ENCODE measurements at regions of chr10 and their contacts with region 1.

Region 1: DNA sequence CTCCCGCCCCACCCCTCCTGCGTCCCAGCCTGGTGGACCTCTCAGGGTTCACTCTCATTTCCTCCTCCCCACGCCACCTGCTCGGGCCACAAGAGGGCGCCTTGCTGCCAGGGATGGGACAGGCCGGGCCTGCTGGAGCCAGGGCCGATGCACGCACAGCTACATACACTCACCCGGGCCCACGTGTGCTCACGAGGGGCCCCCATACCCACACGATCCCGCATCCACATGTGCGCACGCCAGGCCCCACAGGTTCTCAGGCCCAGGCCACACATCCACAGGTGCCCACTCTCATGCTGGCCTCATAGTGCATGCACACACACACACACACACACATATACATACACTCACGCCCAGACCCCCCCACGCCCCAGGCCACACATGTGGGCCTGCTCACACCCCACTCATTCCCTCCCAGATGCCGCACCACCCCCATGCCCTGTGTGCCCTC is 68.6 kb downstream of the LHPP start:
- DNase-seq: peak; percentile 92
- ATAC-seq: peak; percentile 81
- H3K4me3 Mint-ChIP-seq: no peak overlapping the region
- H3K27ac Mint-ChIP-seq: no peak overlapping the region
- H3K4me1 Mint-ChIP-seq: peaks cover 32% of the 10 kb centered on the region
- H3K27me3 Mint-ChIP-seq: no peaks in the 10 kb centered on the region; the same call in 1 of the 2 replicates
- CTCF ChIP-seq: peak; percentile 83

Region 2: DNA sequence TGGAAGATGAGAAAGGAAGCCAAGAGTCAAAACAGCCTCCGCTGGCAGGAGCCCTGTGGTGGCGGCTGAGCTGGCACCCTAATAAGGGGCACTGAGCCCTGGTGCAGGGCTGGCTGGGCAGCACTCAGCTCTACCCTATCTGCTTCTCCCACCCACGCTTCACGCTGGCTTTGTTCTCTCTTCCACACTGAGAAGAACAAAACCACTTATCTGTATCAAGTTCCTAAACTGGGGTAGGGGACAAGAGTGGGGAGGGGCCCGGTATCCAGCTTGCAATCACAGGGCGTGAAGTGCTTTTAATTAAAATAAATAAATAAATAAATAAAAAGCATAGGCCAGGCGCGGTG is 161.8 kb after region 1 on chr10:
- CTCF ChIA-PET with region 1: no interaction called
- POLR2A ChIA-PET with region 1: interaction called, 12 read pairs
- DNase-seq: no peak
- ATAC-seq: no peak
- H3K4me3 Mint-ChIP-seq: no peak overlapping the region
- H3K27ac Mint-ChIP-seq: no peak overlapping the region
- H3K4me1 Mint-ChIP-seq: peaks cover 16% of the 10 kb centered on the region
- H3K27me3 Mint-ChIP-seq: no peaks in the 10 kb centered on the region
- CTCF ChIP-seq: no peak